WTC11 (cell line): ENCODE measurements at regions of chr19 and their contacts with region 1.

Region 1: GRCh38 chr19:670609-671075 is 5.5 kb upstream of the FSTL3 start:
- DNase-seq: peak; percentile 54
- ATAC-seq: peak; percentile 86
- H3K4me3 Mint-ChIP-seq: no peak overlapping the region
- H3K27ac Mint-ChIP-seq: no peak overlapping the region
- H3K4me1 Mint-ChIP-seq: no peaks in the 10 kb centered on the region
- H3K27me3 Mint-ChIP-seq: peaks cover 31% of the 10 kb centered on the region
- CTCF ChIP-seq: 0 out of 2 replicates have a peak, but pooled peaks have one; percentile 12

Region 2: GRCh38 chr19:588093-588740 is 82.4 kb before region 1 on chr19:
- CTCF ChIA-PET with region 1: no interaction called
- POLR2A ChIA-PET with region 1: no interaction called
- DNase-seq: peak; percentile 90
- ATAC-seq: peak; percentile 60
- H3K4me3 Mint-ChIP-seq: peak overlapping the region; percentile 16; the same call in 1 of the 2 replicates
- H3K27ac Mint-ChIP-seq: no peak overlapping the region
- H3K4me1 Mint-ChIP-seq: peaks cover 4% of the 10 kb centered on the region; the same call in 1 of the 2 replicates
- H3K27me3 Mint-ChIP-seq: peaks cover 36% of the 10 kb centered on the region
- CTCF ChIP-seq: 0 out of 2 replicates have a peak, but pooled peaks have one; percentile 25

Region 3: DNA sequence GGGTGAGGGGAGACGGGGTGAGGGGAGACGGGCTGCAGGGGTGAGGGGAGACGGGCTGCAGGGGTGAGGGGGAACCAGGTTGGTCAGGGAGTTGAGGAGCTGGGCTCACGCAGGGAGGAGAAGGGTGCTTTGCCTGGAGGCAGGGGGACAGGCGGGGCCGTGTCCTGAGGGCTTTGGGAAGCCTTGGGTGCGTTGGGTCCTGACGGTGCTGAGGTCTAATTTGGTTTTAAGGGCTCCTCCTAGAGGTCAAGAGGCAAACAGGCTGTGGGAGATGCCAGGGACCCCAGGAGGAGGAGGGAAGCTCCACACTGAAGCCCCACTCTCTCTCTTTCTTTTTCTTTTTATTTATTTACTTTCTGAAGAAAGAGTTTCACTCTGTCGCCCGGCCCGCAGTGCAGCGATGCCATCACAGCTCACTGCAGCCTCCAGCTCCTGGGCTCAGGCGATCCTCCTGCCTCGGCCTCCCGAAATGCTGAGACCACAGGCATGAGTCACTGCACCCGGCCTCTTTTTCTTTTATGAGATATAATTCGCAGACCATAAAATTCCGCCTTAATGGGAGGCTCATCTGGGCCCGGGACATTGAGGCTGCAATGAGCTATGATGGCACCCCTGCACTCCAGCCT is 71.0 kb after region 1 on chr19:
- CTCF ChIA-PET with region 1: interaction called, 13 read pairs
- POLR2A ChIA-PET with region 1: no interaction called
- DNase-seq: peak; percentile 68
- ATAC-seq: peak; percentile 68
- H3K4me3 Mint-ChIP-seq: no peak overlapping the region
- H3K27ac Mint-ChIP-seq: no peak overlapping the region
- H3K4me1 Mint-ChIP-seq: no peaks in the 10 kb centered on the region
- H3K27me3 Mint-ChIP-seq: no peaks in the 10 kb centered on the region
- CTCF ChIP-seq: no peak